Heart right ventricle (tissue), 16 donors: ENCODE measurements at regions of chrX and their contacts with region 1.

Region 1: DNA sequence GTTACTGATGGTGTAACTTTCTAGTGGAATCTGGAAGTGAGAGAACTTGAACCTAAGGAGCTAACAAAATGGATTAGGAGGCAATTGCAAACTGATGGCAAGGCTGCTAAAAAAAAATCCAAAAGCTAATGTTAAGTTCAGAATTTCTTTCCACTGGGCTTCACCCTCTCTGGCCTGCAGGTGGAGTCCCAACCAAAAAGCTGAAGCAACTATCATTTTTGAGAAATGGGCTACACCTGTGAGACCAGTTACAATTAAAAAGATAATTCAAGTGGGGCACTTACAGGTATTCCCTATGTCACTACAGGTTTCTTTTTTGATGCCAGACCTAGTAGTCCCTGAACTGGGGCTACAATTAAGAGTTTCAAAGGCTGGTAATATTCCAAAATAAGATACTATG is 142.1 kb upstream of the FTHL17 start:
- DNase-seq: peak in 1 of 2 donors; percentile 11
- ATAC-seq: peak in 2 of 8 donors; percentile 45 to 48
- H3K4me3 ChIP-seq: no peak overlapping the region
- H3K27ac ChIP-seq: no peak overlapping the region
- H3K4me1 ChIP-seq: peaks cover 0 to 38% (median 9%) of the 10 kb centered on the region in 9 donors
- H3K27me3 ChIP-seq: peaks cover 0 to 3% (median 0%) of the 10 kb centered on the region in 7 donors
- CTCF ChIP-seq: peak; percentile 11 to 61 (median 45)

Region 2: GRCh38 chrX:30992381-30992904 is 221.5 kb before region 1 on chrX:
- intact Hi-C with region 1: no loop called
- DNase-seq: no peak
- ATAC-seq: no peak
- H3K4me3 ChIP-seq: no peak overlapping the region
- H3K27ac ChIP-seq: no peak overlapping the region
- H3K4me1 ChIP-seq: peaks cover 0 to 11% (median 0%) of the 10 kb centered on the region in 9 donors
- H3K27me3 ChIP-seq: peaks cover 0 to 31% (median 0%) of the 10 kb centered on the region in 7 donors
- CTCF ChIP-seq: no peak

Region 3: GRCh38 chrX:31266172-31267076 is 52.5 kb after region 1 on chrX:
- intact Hi-C with region 1: loop called in 2 of 10 experiments (anchors 10 kb)
- DNase-seq: peak; percentile 49 to 66
- ATAC-seq: peak; percentile 89 to 97 (median 92)
- H3K4me3 ChIP-seq: peak overlapping the region; percentile 47 to 81 (median 66)
- H3K27ac ChIP-seq: peak overlapping the region; percentile 52 to 84 (median 78)
- H3K4me1 ChIP-seq: peaks cover 0 to 9% (median 0%) of the 10 kb centered on the region in 9 donors
- H3K27me3 ChIP-seq: peaks cover 0 to 50% (median 0%) of the 10 kb centered on the region in 7 donors
- CTCF ChIP-seq: no peak

Region 4: GRCh38 chrX:31353095-31353494 is 139.2 kb after region 1 on chrX:
- intact Hi-C with region 1: loop called in 1 of 10 experiments (anchors 5 kb)
- DNase-seq: no peak
- ATAC-seq: no peak
- H3K4me3 ChIP-seq: no peak overlapping the region
- H3K27ac ChIP-seq: no peak overlapping the region
- H3K4me1 ChIP-seq: peaks cover 0 to 4% (median 0%) of the 10 kb centered on the region in 9 donors
- H3K27me3 ChIP-seq: no peaks in the 10 kb centered on the region
- CTCF ChIP-seq: no peak

Region 5: DNA sequence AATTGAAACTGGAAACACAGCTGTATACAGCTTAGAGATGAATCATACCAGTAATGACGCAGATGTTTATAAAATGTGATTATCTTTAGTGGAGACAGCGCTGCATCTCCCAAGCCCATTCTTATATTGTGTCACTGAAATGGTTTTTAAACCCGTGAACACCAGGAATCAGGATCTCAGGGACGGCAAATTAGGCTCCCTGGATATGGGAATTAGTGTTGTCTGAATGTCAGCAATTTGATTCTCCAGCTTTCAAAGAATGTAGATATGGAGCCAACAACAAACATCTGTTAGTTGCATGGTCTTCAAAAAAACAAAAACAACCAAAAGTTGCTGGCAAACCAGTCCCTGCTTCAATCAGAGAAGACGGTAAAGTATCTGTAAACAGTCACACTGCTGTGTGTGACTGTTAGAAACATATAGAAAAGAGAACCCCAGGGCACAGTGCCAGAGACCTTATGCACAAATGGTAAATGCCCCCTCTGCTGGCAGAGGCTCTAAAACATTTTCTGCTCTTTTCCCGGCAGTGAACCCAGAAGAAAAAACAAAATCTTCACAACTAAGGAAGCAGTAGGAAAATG is 209.8 kb after region 1 on chrX:
- intact Hi-C with region 1: loop called in 1 of 10 experiments (anchors 10 kb)
- DNase-seq: peak in 1 of 2 donors; percentile 37
- ATAC-seq: peak in 5 of 8 donors; percentile 10 to 71 (median 22)
- H3K4me3 ChIP-seq: peak overlapping the region in 5 of 10 donors; percentile 4 to 31 (median 13)
- H3K27ac ChIP-seq: peak overlapping the region in 4 of 10 donors; percentile 3 to 36 (median 18)
- H3K4me1 ChIP-seq: peaks cover 0 to 5% (median 0%) of the 10 kb centered on the region in 9 donors
- H3K27me3 ChIP-seq: peaks cover 0 to 4% (median 0%) of the 10 kb centered on the region in 7 donors
- CTCF ChIP-seq: peak in 6 of 9 donors; percentile 27 to 53 (median 40)

Region 6: DNA sequence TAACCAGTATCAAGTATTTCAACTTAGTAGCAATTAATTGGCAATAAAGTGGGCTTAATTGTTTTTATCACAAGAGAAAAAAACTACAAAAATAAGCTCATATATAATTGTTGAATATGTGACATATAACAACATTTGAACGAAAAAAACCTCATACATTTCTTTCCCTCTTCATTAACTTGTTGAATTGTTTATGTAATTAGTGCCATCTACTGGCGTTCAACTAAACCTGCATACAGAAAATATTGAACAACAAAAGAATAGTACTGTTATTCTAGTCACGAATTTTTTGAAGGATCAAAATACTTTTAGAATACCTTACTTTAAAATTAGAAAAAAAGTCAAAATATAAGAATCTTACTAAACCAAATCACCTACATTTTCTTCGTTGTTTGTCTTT is 444.4 kb after region 1 on chrX:
- intact Hi-C with region 1: loop called in 4 of 10 experiments (anchors 5 to 10 kb)
- DNase-seq: no peak
- ATAC-seq: no peak
- H3K4me3 ChIP-seq: no peak overlapping the region
- H3K27ac ChIP-seq: no peak overlapping the region
- H3K4me1 ChIP-seq: no peaks in the 10 kb centered on the region
- H3K27me3 ChIP-seq: no peaks in the 10 kb centered on the region
- CTCF ChIP-seq: peak; percentile 16 to 69 (median 58)